GM12878 (cell line): ENCODE measurements at regions of chr14 and their contacts with region 1.

Region 1: GRCh38 chr14:101225450-101226152 is 322.1 kb upstream of the RTL1 start:
- DNase-seq: no peak
- ATAC-seq: no peak
- H3K4me3 ChIP-seq: no peak overlapping the region
- H3K27ac ChIP-seq: no peak overlapping the region
- H3K4me1 ChIP-seq: no peaks in the 10 kb centered on the region
- H3K27me3 ChIP-seq: no peaks in the 10 kb centered on the region
- CTCF ChIP-seq: no peak
- EP300 ChIP-seq: no peak
- POLR2A ChIP-seq: no peak
- RAD21 ChIP-seq: no peak

Region 2: GRCh38 chr14:101177301-101177971 is 48.2 kb before region 1 on chr14:
- CTCF ChIA-PET with region 1: no interaction called
- POLR2A ChIA-PET with region 1: no interaction called
- RAD21 ChIA-PET with region 1: no interaction called
- SMC1A ChIA-PET with region 1: no interaction called
- in situ Hi-C with region 1: no loop called
- intact Hi-C with region 1: loop called (anchors 2 kb)
- DNase-seq: no peak
- ATAC-seq: no peak
- H3K4me3 ChIP-seq: no peak overlapping the region
- H3K27ac ChIP-seq: no peak overlapping the region
- H3K4me1 ChIP-seq: no peaks in the 10 kb centered on the region
- H3K27me3 ChIP-seq: no peaks in the 10 kb centered on the region
- CTCF ChIP-seq: no peak
- EP300 ChIP-seq: no peak
- POLR2A ChIP-seq: no peak
- RAD21 ChIP-seq: no peak

Region 3: DNA sequence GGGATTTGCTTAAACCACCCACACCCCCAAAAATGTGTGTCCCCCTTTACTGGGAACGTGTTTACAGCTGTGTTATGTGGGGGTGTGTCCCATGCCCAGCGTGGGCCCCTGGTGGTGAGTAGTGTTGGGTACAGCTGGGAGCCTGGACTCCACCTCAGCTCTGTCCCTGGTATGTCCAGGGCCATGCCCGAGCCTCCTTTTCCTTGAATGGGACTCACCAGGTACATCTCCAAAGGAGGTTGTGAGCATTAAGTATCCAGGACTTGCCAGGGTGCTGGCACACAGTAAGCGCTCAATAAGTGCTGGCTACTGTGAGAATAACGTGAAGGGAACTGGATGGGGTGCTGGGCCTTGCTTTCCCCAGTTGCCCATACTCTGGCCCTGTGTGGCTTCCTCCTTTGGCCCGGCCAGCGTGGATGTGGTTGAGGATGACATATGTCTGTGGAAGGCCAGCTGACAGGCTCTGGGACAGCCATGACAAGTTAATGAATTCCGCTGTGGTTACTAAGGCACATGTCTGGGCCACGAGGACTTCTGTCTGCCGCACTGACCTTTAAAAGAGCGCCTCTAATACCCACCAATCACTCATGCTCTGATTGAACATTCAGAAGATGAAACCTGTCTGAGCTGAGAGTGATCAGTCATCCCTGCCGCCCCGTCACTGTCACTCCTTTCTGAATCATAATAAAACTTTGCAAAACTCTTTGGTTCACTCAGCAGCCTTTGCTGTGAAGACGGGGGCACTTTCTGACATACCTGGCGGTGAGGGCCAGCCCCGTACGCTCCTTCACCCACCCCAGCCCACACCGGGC is 410.4 kb after region 1 on chr14:
- CTCF ChIA-PET with region 1: no interaction called
- POLR2A ChIA-PET with region 1: no interaction called
- RAD21 ChIA-PET with region 1: no interaction called
- SMC1A ChIA-PET with region 1: no interaction called
- in situ Hi-C with region 1: no loop called
- intact Hi-C with region 1: no loop called
- DNase-seq: peak; percentile 3
- ATAC-seq: peak; percentile 95
- H3K4me3 ChIP-seq: no peak overlapping the region
- H3K27ac ChIP-seq: no peak overlapping the region
- H3K4me1 ChIP-seq: no peaks in the 10 kb centered on the region
- H3K27me3 ChIP-seq: no peaks in the 10 kb centered on the region; a peak in 1 of 4 replicates
- CTCF ChIP-seq: no peak
- EP300 ChIP-seq: peak in 1 of 2 experiments; percentile 4; a peak in 1 of 4 replicates
- POLR2A ChIP-seq: no peak
- RAD21 ChIP-seq: no peak